Transverse colon (tissue), 4 donors: ENCODE measurements at regions of chr4 and their contacts with region 1.

Region 1: DNA sequence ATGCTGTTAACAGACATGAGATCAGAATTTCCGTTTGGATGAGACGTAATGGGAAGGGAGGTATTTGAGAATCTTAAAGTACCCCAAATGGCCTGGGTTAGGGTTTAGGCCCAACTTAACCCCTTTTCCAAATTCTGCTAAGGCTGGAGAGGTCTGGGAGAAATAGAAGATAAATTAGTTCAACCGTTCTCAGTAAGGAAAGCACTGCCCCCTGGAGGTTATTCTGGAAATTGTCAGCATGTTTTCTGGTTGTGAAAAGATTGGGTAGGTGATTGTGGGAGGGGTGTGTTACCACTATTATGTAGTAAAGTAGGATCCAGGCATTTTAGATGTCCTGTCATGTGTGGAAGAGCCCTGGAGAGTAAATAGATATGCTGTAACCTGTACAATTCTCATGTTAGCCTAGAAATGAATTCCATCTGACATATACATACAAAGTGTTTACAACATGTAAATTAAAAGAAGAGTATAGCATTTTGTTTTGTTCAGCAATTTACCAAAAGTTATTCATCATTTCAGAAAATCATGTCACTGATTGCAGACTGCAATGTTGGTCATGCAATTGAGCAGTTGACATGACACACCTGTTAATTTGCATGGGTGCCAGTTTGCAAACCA is 26.8 kb upstream of the GRXCR1 start:
- DNase-seq: peak; percentile 44
- H3K4me3 ChIP-seq: no peak overlapping the region
- H3K27ac ChIP-seq: no peak overlapping the region
- H3K4me1 ChIP-seq: no peaks in the 10 kb centered on the region
- H3K27me3 ChIP-seq: no peaks in the 10 kb centered on the region
- CTCF ChIP-seq: peak; percentile 66 to 76 (median 71)
- EP300 ChIP-seq: no peak
- POLR2A ChIP-seq: no peak

Region 2: DNA sequence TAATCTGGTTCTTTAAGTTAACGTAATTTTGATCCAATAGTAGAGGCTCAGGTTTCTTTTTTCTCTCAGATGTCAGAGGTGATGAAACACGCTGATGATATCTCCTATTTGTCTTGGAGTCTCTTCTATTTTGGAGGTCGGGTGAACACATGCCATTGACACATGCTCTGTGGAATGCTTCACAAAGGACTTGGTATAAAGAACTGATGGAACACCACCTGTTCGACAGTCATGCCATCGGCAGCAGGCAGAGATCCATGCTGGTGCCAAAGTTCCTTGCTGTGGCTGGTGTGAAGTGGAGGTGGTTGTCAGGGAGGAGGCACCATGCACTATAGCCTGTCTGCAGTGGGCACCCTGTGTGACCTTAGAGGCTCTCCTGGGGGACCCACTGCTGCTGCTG is 303.7 kb before region 1 on chr4:
- in situ Hi-C with region 1: loop called in 3 of 4 experiments (anchors 5 to 25 kb)
- intact Hi-C with region 1: loop called (anchors 5 kb)
- DNase-seq: no peak
- H3K4me3 ChIP-seq: no peak overlapping the region
- H3K27ac ChIP-seq: no peak overlapping the region
- H3K4me1 ChIP-seq: no peaks in the 10 kb centered on the region
- H3K27me3 ChIP-seq: no peaks in the 10 kb centered on the region
- CTCF ChIP-seq: no peak
- EP300 ChIP-seq: no peak
- POLR2A ChIP-seq: no peak

Region 3: DNA sequence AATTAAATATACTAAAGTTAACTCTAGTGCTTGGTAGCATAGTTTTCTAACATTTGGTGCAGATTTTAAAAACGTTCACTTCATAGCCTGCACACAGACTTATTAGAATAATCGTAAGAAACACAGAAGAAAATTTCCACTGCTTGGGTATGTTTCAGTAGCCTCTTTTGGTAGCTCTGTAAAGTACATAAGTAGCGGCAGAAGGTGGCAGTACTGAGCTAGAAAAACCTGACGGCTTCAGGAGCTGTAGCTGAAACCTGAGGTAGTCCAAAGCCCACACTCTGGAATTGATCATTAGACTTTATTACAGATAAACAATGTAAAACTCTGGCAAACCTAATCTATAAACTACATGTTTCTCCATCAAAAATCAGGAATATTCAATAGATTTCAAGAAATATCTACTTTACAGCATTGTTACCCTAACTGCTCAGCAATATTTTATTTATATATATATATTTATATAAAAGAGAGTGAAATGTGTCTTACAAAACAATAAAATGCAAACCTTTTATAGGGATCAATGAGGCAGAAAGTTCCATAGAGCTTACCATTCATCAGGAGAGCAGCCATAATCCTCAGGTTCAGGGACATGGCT is 297.0 kb before region 1 on chr4:
- in situ Hi-C with region 1: loop called (anchors 5 to 25 kb)
- intact Hi-C with region 1: loop called (anchors 5 kb)
- DNase-seq: peak; percentile 72
- H3K4me3 ChIP-seq: no peak overlapping the region
- H3K27ac ChIP-seq: no peak overlapping the region
- H3K4me1 ChIP-seq: peaks cover 0 to 3% (median 1%) of the 10 kb centered on the region in 4 donors
- H3K27me3 ChIP-seq: no peaks in the 10 kb centered on the region
- CTCF ChIP-seq: peak; percentile 62 to 73 (median 68)
- EP300 ChIP-seq: no peak
- POLR2A ChIP-seq: no peak

Region 4: GRCh38 chr4:42789041-42789567 is 76.6 kb before region 1 on chr4:
- in situ Hi-C with region 1: no loop called
- intact Hi-C with region 1: no loop called
- DNase-seq: no peak
- H3K4me3 ChIP-seq: no peak overlapping the region
- H3K27ac ChIP-seq: no peak overlapping the region
- H3K4me1 ChIP-seq: no peaks in the 10 kb centered on the region
- H3K27me3 ChIP-seq: no peaks in the 10 kb centered on the region
- CTCF ChIP-seq: no peak
- EP300 ChIP-seq: no peak
- POLR2A ChIP-seq: no peak

Region 5: DNA sequence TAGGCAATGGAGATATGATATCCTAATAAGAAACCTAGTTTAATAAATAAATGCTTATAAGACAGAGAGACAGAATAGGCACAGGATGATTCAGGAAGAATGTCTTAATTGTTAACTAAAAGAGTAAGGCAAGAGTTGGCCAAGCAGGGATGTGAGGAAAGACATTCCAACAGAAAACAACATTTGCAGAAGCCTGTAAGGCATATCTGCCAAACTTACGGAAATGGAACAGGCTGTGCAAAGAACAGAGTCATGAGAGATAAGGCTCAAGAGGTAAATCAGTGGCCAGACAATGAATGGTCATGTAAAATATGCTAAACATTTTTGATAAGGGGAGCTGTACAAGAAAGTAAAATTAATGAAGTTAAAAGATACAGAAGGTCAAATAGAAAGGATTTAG is 1448.0 kb after region 1 on chr4:
- in situ Hi-C with region 1: no loop called
- intact Hi-C with region 1: no loop called
- DNase-seq: no peak
- H3K4me3 ChIP-seq: no peak overlapping the region
- H3K27ac ChIP-seq: no peak overlapping the region
- H3K4me1 ChIP-seq: no peaks in the 10 kb centered on the region
- H3K27me3 ChIP-seq: no peaks in the 10 kb centered on the region
- CTCF ChIP-seq: no peak
- EP300 ChIP-seq: no peak
- POLR2A ChIP-seq: no peak